H1 (cell line): ENCODE measurements at regions of chr18 and their contacts with region 1.

Region 1: DNA sequence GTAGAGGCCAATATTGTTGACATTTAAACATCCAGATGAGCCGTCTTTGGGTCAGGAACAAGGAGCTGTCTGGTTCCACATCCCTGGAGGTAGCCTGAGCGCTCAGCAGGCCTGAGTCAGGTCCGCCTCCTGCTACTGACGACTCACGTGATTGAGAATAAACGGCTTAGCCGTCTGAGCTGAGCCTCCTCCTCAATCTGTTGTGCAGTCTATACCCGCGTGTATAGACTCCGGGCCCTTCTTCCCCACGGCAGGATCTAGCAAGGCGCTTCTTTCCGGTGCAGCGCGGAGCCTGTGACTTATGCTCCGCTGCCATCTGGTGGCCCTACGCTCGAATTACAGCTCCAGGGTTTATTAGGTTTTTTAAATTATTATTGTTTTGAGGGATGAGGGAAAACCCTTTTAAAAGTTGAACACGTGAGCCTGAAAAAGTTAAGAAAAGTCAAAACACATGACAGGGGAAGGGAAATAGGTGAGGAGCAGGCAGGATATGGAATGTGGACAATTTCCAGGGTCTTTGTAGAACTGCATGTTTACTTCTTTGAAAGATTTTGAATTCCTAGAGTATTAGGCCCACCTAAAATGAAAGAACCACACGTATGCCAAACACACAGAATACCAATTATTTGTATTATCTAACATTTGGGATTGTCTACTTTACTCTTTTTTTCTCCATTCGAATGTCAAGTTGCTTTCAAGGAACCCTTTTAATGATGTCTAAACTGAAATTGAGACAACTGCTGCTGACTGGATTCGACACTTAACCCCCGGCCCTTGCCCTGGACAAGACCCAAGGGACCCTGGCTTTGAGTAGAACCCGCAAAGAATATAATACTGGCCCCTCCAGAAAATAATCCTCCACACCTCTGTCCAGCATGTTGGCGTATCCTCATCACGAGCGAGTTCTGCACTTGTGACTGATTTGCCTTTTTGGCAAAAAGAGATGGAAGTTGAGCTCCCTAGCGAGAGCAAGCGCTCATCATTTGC is 112.4 kb upstream of the ZNF236 start:
- DNase-seq: peak; percentile 34 to 73
- H3K4me3 ChIP-seq: no peak overlapping the region
- H3K27ac ChIP-seq: no peak overlapping the region
- H3K4me1 ChIP-seq: no peaks in the 10 kb centered on the region; a peak in 1 of 7 replicates
- H3K27me3 ChIP-seq: no peaks in the 10 kb centered on the region
- CTCF ChIP-seq: peak; percentile 67 to 91 (median 79)
- EP300 ChIP-seq: no peak
- POLR2A ChIP-seq: no peak
- RAD21 ChIP-seq: peak; percentile 98 to 99

Region 2: DNA sequence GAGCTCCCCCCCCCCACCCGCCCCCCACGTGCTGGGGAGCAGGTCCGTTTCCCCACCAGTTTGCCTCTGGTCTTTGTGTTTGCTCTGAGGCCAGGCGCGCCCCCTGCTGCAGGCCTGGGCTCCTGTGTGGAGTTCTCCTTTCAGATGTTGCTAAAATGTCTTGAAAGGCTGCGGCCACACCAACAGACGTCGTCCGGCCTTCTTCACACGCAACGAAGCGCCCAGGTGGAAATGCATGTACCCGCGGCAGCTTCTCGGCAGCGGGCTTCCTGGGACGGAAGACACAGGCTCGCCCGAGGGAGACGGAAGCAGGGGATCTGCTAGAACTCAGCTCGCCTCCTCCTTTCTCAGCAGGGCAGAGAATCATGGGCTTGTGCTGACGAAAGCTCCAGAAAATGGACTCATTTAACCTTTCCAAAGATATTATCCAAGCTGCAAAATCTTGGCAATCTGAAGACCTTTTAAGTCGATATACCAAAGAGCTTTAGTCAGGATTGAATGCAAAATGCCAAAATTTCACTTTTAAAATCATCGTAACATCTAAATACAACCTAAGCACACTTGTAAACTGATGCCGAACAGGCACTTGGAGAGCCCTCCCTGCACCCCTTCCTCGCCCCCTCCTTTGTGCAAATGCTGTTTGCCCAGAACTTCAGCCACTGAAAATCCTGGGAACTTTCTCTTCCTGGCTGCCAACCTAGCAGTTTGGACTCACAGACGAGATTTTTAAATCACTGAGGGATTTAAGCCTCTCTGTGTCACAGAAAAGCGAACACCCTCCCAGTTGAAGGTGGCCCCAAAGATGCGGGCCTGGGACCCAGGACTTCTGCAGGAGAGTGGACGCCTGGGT is 89.4 kb before region 1 on chr18:
- CTCF ChIA-PET with region 1: interaction called, 15 read pairs
- POLR2A ChIA-PET with region 1: no interaction called
- DNase-seq: no peak
- H3K4me3 ChIP-seq: peak overlapping the region; percentile 44 to 70 (median 62)
- H3K27ac ChIP-seq: no peak overlapping the region
- H3K4me1 ChIP-seq: peaks cover 6 to 19% (median 10%) of the 10 kb centered on the region in 4 experiments
- H3K27me3 ChIP-seq: peaks cover 0 to 16% (median 13%) of the 10 kb centered on the region in 4 experiments; a peak in 4 of 7 replicates
- CTCF ChIP-seq: peak; percentile 59 to 73 (median 66)
- EP300 ChIP-seq: no peak
- POLR2A ChIP-seq: no peak
- RAD21 ChIP-seq: peak; percentile 60 to 70

Region 3: DNA sequence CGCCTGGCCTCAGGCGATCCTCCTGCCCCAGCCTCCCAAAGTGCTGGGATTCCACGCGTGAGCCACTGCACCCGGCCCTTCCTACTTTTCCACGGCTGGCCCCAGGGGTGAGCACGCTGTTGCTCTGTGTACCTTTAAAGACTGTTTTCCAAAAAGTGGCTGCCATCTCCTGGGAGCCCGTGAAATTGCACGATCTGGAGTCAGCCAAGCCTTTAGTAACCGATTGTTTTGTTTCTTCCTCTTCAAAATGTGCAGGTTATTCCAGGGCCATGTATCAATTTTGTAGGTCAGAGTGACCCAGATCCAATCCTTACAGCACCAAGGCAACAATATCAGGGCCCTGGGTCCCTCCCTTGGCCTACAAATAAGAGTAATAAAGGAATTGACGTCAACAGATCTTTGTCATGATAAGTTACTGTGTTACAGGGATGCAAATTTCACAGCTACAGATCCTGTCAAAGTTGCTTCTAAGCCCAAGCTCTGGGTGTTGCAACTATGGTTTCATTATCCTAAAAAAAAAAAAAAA is 23.2 kb before region 1 on chr18:
- CTCF ChIA-PET with region 1: interaction called, 11 read pairs
- POLR2A ChIA-PET with region 1: no interaction called
- DNase-seq: peak in 1 of 2 experiments; percentile 67
- H3K4me3 ChIP-seq: no peak overlapping the region; a peak in 1 of 8 replicates
- H3K27ac ChIP-seq: 0 out of 2 replicates have a peak overlapping the region, but pooled peaks have one; percentile 13
- H3K4me1 ChIP-seq: peaks cover 0 to 11% (median 0%) of the 10 kb centered on the region in 4 experiments; a peak in 5 of 7 replicates
- H3K27me3 ChIP-seq: no peaks in the 10 kb centered on the region
- CTCF ChIP-seq: peak in 2 of 3 experiments; percentile 51 to 55; a peak in 3 of 4 replicates
- EP300 ChIP-seq: no peak
- POLR2A ChIP-seq: no peak
- RAD21 ChIP-seq: peak; percentile 59 to 68

Region 4: GRCh38 chr18:76697441-76697901 is 12.5 kb before region 1 on chr18:
- CTCF ChIA-PET with region 1: interaction called, 14 read pairs
- POLR2A ChIA-PET with region 1: no interaction called
- DNase-seq: no peak
- H3K4me3 ChIP-seq: no peak overlapping the region
- H3K27ac ChIP-seq: no peak overlapping the region
- H3K4me1 ChIP-seq: no peaks in the 10 kb centered on the region; a peak in 2 of 7 replicates
- H3K27me3 ChIP-seq: no peaks in the 10 kb centered on the region
- CTCF ChIP-seq: no peak
- EP300 ChIP-seq: no peak
- POLR2A ChIP-seq: no peak
- RAD21 ChIP-seq: no peak